ENCODE measurements at regions of chr7 and their contacts with region 1.

Region 1: DNA sequence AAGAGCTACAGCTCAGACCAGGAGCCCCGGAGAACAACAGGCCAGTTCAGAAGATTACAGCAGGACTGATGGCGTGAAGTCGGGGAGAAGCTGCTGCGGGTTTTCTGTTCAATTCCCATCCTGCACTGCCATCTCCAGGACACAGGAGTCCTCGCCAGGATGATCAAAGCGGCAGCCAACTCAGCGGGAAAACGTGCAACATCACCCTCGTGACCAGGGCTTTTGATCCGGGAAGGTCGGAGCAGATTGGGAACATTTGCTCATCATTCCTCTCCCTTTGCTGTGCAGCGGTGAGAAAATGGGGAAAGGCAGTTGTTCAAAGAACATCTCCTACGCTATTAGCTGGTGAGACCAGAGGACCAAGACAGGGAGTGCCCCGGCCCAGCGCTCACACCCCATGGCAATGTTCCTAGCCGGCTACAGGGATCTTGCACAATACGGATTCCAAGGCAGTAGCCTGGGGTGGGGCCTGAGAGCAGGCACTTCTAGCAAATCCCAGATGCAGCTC is 50.4 kb upstream of the FOXK1 start:
- DNase-seq: peak; percentile 88 to 91
- H3K4me3 ChIP-seq: peak overlapping the region; percentile 33
- H3K4me3 Mint-ChIP-seq: peak overlapping the region; percentile 78
- H3K27ac Mint-ChIP-seq: peak overlapping the region; percentile 89
- H3K4me1 ChIP-seq: peaks cover 13% of the 10 kb centered on the region; the same call in 1 of the 2 replicates
- H3K4me1 Mint-ChIP-seq: peaks cover 7% of the 10 kb centered on the region
- H3K27me3 ChIP-seq: no peaks in the 10 kb centered on the region
- H3K27me3 Mint-ChIP-seq: no peaks in the 10 kb centered on the region
- CTCF ChIP-seq: peak; percentile 73 to 88

Region 2: DNA sequence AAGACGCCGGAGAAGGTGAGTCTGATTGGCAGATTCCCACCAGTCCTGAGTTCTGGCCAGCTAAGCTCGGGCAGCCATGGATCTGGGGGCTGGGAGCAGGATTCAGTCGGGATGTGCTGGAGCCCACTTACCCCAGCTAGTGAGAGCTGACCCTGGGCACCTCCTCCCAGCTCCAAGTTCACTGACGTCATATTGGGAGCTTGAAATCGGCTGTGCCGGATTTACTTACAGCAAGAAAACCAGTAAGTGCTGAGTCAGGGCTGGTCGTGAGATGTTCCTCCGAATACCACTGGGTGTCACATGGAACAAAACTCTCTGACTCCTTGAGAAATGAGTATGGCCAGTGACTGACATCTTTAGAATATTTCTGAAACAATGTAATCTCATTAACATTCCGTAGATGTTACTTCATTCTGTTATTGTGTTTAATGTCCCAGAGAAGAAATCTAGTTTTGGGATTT is 709.5 kb before region 1 on chr7:
- CTCF ChIA-PET with region 1: no interaction called
- POLR2A ChIA-PET with region 1: no interaction called
- intact Hi-C with region 1: loop called (anchors 2 kb)
- DNase-seq: peak; percentile 55 to 69
- H3K4me3 ChIP-seq: no peak overlapping the region
- H3K4me3 Mint-ChIP-seq: no peak overlapping the region
- H3K27ac Mint-ChIP-seq: peak overlapping the region; percentile 60
- H3K4me1 ChIP-seq: no peaks in the 10 kb centered on the region
- H3K4me1 Mint-ChIP-seq: no peaks in the 10 kb centered on the region
- H3K27me3 ChIP-seq: no peaks in the 10 kb centered on the region
- H3K27me3 Mint-ChIP-seq: no peaks in the 10 kb centered on the region
- CTCF ChIP-seq: peak in 1 of 2 experiments; percentile 27

Region 3: GRCh38 chr7:4352069-4352468 is 279.6 kb before region 1 on chr7:
- CTCF ChIA-PET with region 1: no interaction called
- POLR2A ChIA-PET with region 1: no interaction called
- intact Hi-C with region 1: no loop called
- DNase-seq: no peak
- H3K4me3 ChIP-seq: no peak overlapping the region
- H3K4me3 Mint-ChIP-seq: no peak overlapping the region
- H3K27ac Mint-ChIP-seq: no peak overlapping the region
- H3K4me1 ChIP-seq: no peaks in the 10 kb centered on the region
- H3K4me1 Mint-ChIP-seq: no peaks in the 10 kb centered on the region
- H3K27me3 ChIP-seq: no peaks in the 10 kb centered on the region
- H3K27me3 Mint-ChIP-seq: no peaks in the 10 kb centered on the region
- CTCF ChIP-seq: no peak

Region 4: GRCh38 chr7:4416396-4417056 is 215.2 kb before region 1 on chr7:
- CTCF ChIA-PET with region 1: no interaction called
- POLR2A ChIA-PET with region 1: no interaction called
- intact Hi-C with region 1: no loop called
- DNase-seq: peak in 1 of 2 experiments; percentile 40
- H3K4me3 ChIP-seq: peak overlapping the region; percentile 11; the same call in 1 of the 2 replicates
- H3K4me3 Mint-ChIP-seq: peak overlapping the region; percentile 76
- H3K27ac Mint-ChIP-seq: no peak overlapping the region
- H3K4me1 ChIP-seq: no peaks in the 10 kb centered on the region
- H3K4me1 Mint-ChIP-seq: peaks cover 12% of the 10 kb centered on the region
- H3K27me3 ChIP-seq: no peaks in the 10 kb centered on the region
- H3K27me3 Mint-ChIP-seq: no peaks in the 10 kb centered on the region
- CTCF ChIP-seq: no peak

Region 5: DNA sequence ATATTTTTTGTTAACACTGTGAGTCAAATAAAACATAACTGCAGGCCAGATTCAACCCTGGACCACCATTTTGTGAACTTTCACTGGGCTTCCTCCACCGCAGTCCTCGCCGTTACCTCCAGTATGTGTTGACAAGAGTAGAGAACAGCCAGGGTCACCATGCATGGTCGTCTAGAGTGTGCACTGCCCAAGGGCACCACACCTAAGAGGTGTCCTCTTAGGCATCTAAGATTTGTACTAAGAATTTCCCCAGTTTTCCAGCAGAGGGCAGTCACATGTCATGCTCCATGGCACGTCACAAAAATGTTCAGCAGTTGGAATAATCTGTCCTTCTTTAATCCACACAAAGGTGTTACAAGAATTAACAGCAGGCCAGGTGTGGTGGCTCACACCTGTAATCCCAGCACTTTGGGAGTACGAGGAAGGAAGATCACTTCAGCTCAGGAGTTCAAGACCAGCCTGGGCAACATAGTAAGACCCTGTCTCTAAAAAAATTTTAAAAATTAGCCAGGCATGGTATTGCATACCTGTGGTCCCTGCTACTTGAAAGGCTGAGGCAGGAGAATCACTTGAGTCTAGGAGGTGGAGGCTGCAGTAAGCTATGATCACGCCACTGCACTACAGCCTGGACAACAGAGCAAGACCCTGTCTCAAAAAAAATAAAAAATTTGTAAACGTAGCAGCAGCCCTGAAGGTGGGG is 20.8 kb before region 1 on chr7:
- CTCF ChIA-PET with region 1: interaction called, 4 read pairs
- POLR2A ChIA-PET with region 1: no interaction called
- intact Hi-C with region 1: loop called (anchors 1 kb)
- DNase-seq: peak; percentile 69 to 75
- H3K4me3 ChIP-seq: no peak overlapping the region
- H3K4me3 Mint-ChIP-seq: no peak overlapping the region
- H3K27ac Mint-ChIP-seq: no peak overlapping the region
- H3K4me1 ChIP-seq: no peaks in the 10 kb centered on the region
- H3K4me1 Mint-ChIP-seq: peaks cover 14% of the 10 kb centered on the region
- H3K27me3 ChIP-seq: no peaks in the 10 kb centered on the region
- H3K27me3 Mint-ChIP-seq: no peaks in the 10 kb centered on the region
- CTCF ChIP-seq: peak; percentile 76

Measured in Caco-2 (cell line).